Endothelial cell of umbilical vein (primary cell): ENCODE measurements at regions of chr2 and their contacts with region 1.

Region 1: DNA sequence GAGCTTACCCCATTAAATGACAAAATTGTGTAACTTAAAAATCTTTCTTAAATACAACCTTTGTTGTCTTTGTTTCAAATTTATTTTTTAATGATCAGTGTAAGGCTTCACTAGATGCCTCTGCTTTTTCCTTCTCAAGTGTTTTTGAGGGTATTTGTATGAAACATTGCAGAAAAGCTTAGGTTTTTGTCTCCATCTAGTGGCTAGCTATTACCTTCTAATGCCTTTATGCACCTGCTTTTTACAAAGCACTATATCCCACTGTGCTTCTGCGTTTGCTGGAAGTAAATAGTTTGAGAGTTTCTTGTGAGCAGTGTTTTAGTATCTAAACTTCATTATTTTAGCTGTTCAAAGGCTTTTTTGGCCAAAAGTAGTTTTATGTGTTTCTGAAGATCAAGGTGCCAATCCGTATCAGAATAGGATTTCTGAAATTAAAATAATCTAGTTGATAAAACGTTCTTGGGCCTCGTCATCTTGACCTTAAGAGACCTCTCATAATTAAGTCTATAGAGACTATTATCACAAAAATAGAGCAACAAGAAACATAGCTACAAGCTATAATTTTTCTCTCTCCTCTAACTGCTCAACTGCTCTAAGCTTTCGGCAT is 47.0 kb downstream of the IWS1 start:
- DNase-seq: peak; percentile 70
- H3K4me3 ChIP-seq: no peak overlapping the region
- H3K27ac ChIP-seq: no peak overlapping the region
- H3K4me1 ChIP-seq: no peaks in the 10 kb centered on the region
- H3K27me3 ChIP-seq: no peaks in the 10 kb centered on the region
- CTCF ChIP-seq: peak; percentile 46 to 55
- POLR2A ChIP-seq: no peak

Region 2: GRCh38 chr2:127197475-127198385 is 281.6 kb before region 1 on chr2:
- CTCF ChIA-PET with region 1: interaction called, 30 read pairs
- POLR2A ChIA-PET with region 1: no interaction called
- dilution Hi-C with region 1: no loop called
- intact Hi-C with region 1: loop called (anchors 1 kb)
- DNase-seq: peak; percentile 39
- H3K4me3 ChIP-seq: no peak overlapping the region
- H3K27ac ChIP-seq: no peak overlapping the region
- H3K4me1 ChIP-seq: no peaks in the 10 kb centered on the region
- H3K27me3 ChIP-seq: peaks cover 2 to 4% of the 10 kb centered on the region in 2 experiments
- CTCF ChIP-seq: peak; percentile 47 to 55
- POLR2A ChIP-seq: no peak

Region 3: GRCh38 chr2:127313406-127313805 is 165.9 kb before region 1 on chr2:
- CTCF ChIA-PET with region 1: interaction called, 10 read pairs
- POLR2A ChIA-PET with region 1: no interaction called
- dilution Hi-C with region 1: no loop called
- intact Hi-C with region 1: no loop called
- DNase-seq: no peak
- H3K4me3 ChIP-seq: no peak overlapping the region
- H3K27ac ChIP-seq: no peak overlapping the region
- H3K4me1 ChIP-seq: no peaks in the 10 kb centered on the region
- H3K27me3 ChIP-seq: no peaks in the 10 kb centered on the region
- CTCF ChIP-seq: no peak
- POLR2A ChIP-seq: no peak

Region 4: GRCh38 chr2:127330753-127331152 is 148.6 kb before region 1 on chr2:
- CTCF ChIA-PET with region 1: interaction called, 37 read pairs
- POLR2A ChIA-PET with region 1: no interaction called
- dilution Hi-C with region 1: no loop called
- intact Hi-C with region 1: no loop called
- DNase-seq: no peak
- H3K4me3 ChIP-seq: no peak overlapping the region
- H3K27ac ChIP-seq: no peak overlapping the region
- H3K4me1 ChIP-seq: no peaks in the 10 kb centered on the region
- H3K27me3 ChIP-seq: no peaks in the 10 kb centered on the region
- CTCF ChIP-seq: no peak
- POLR2A ChIP-seq: no peak

Region 5: GRCh38 chr2:127415593-127416505 is 63.5 kb before region 1 on chr2:
- CTCF ChIA-PET with region 1: interaction called, 13 read pairs
- POLR2A ChIA-PET with region 1: no interaction called
- dilution Hi-C with region 1: no loop called
- intact Hi-C with region 1: no loop called
- DNase-seq: peak; percentile 58
- H3K4me3 ChIP-seq: peak overlapping the region in 2 of 3 experiments; percentile 26 to 31
- H3K27ac ChIP-seq: no peak overlapping the region
- H3K4me1 ChIP-seq: peaks cover 35% of the 10 kb centered on the region
- H3K27me3 ChIP-seq: peaks cover 0 to 2% of the 10 kb centered on the region in 2 experiments
- CTCF ChIP-seq: peak; percentile 57 to 84
- POLR2A ChIP-seq: no peak

Region 6: GRCh38 chr2:127463155-127463991 is 15.9 kb before region 1 on chr2:
- CTCF ChIA-PET with region 1: interaction called, 11 read pairs
- POLR2A ChIA-PET with region 1: no interaction called
- dilution Hi-C with region 1: no loop called
- intact Hi-C with region 1: no loop called
- DNase-seq: no peak
- H3K4me3 ChIP-seq: no peak overlapping the region
- H3K27ac ChIP-seq: no peak overlapping the region
- H3K4me1 ChIP-seq: no peaks in the 10 kb centered on the region
- H3K27me3 ChIP-seq: no peaks in the 10 kb centered on the region
- CTCF ChIP-seq: no peak
- POLR2A ChIP-seq: no peak